ENCODE measurements at regions of chr10 and their contacts with region 1.

Region 1: DNA sequence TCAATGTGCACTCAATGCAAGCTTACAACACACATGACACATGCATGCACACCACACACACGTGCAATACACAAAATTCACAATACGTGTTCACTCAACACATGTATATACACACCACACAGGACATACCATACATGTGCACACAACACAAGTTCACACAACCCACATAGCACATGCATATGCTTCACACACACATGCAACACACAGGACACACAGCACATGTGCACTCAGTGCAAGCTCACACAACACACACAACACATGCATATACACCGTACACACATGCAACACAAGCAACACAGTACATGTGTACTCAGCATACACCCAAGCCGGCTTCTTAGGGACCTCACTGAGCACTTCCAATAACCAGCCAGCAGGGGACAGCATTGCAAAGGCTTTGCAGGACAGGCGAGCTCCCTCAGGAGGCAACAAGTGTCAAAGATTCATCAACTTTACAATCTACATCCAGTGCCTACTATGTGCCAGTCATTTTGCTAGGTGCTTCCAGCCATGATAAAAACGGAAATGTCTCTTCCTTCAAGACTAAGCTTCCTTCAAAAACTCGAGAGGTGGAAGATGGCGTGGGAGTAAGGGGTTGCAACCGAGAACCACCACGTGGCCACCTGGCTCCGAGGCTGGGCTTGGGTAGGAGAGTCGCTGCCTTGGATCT is 61.1 kb downstream of the JCAD start:
- DNase-seq: peak; percentile 76
- CTCF ChIP-seq: peak; percentile 92

Region 2: GRCh38 chr10:30013757-30014156 is 15.5 kb after region 1 on chr10:
- CTCF ChIA-PET with region 1: interaction called, 12 read pairs
- POLR2A ChIA-PET with region 1: no interaction called
- DNase-seq: no peak
- CTCF ChIP-seq: no peak

Region 3: GRCh38 chr10:30022590-30022989 is 24.3 kb after region 1 on chr10:
- CTCF ChIA-PET with region 1: interaction called, 13 read pairs
- POLR2A ChIA-PET with region 1: no interaction called
- DNase-seq: no peak
- CTCF ChIP-seq: no peak

Region 4: DNA sequence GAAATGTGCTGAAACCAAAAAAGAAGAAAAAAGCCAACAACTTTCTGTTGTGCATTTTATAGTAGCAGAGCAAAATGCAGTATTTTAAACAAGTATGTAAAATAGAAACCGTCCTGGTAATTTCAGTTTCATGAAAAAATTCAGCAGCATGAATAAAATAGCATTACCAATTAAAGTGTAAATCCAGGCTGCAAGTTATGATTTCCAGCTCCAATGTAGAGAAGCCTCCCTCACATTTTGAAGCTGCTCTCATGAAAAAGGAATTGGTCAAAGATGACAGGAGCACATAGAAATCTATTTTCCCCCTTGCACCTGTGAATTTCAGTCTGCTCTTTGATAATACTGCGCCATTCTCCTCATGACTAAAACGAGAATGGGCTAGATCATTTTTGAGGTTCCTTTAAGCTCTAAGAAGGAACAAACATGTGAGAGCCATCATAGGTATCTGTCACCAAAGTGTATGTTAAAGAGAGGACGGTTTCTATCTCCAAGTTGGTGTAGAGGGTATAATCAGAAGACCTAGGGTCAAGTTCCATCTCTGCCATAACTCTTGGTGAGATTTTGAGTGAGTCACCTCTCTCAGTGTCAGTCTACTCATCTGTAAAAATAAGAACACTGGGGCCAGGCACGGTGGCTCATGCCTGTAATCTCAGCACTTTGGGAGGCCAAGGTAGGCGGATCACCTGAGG is 243.3 kb after region 1 on chr10:
- CTCF ChIA-PET with region 1: interaction called, 17 read pairs
- POLR2A ChIA-PET with region 1: no interaction called
- DNase-seq: no peak
- CTCF ChIP-seq: no peak

Region 5: DNA sequence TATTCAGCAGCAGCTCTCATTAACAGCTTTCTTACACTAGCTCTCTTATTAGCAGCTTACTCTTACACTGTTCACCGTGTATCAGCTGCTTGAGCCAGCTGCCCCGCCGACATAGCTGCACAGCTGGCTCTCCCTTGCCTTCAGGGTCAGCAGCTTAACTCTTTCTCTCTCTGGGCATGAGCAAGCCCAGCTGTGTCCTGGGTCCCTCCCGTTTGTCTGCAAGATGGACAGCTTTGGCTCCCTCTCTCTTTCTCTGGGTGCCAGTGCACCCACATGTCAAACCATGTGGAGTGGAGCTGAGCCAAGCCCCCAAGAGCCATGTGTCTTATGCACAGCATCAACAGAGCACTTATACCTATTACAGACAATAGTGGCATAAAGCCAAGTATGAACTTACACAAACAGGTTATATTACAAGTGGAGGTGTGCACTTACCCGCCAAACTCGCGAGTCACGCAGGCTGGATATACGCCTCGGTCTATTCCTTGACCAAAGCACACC is 386.5 kb after region 1 on chr10:
- CTCF ChIA-PET with region 1: interaction called, 22 read pairs
- POLR2A ChIA-PET with region 1: no interaction called
- DNase-seq: no peak
- CTCF ChIP-seq: peak; percentile 49

Measured in GM10248 (cell line).